ENCODE measurements at regions of chr1 and their contacts with region 1.

Region 1: DNA sequence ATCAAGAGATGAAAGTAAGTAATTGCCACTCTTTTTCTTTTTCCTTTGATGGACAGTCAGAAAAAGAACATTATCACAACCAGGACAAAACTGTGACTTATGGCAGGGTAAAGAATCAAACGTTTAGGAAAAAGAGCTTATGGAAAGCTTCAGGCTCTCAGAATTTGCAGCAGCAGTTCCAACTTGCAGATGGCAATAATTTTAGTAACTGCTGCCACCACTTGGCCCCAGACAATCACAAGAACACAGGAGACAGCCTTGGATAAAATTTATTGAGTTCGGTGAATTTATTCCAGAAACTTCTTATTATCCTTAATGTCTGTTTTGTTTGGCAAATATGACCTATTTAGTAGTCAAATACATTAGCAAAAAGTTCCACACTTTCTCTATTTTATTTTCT is 804.4 kb downstream of the BRINP3 start:
- DNase-seq: no peak
- H3K4me3 ChIP-seq: no peak overlapping the region
- H3K4me3 Mint-ChIP-seq: no peak overlapping the region
- H3K27ac Mint-ChIP-seq: no peak overlapping the region
- H3K4me1 ChIP-seq: no peaks in the 10 kb centered on the region
- H3K4me1 Mint-ChIP-seq: no peaks in the 10 kb centered on the region
- H3K27me3 ChIP-seq: no peaks in the 10 kb centered on the region
- H3K27me3 Mint-ChIP-seq: no peaks in the 10 kb centered on the region
- CTCF ChIP-seq: no peak

Region 2: DNA sequence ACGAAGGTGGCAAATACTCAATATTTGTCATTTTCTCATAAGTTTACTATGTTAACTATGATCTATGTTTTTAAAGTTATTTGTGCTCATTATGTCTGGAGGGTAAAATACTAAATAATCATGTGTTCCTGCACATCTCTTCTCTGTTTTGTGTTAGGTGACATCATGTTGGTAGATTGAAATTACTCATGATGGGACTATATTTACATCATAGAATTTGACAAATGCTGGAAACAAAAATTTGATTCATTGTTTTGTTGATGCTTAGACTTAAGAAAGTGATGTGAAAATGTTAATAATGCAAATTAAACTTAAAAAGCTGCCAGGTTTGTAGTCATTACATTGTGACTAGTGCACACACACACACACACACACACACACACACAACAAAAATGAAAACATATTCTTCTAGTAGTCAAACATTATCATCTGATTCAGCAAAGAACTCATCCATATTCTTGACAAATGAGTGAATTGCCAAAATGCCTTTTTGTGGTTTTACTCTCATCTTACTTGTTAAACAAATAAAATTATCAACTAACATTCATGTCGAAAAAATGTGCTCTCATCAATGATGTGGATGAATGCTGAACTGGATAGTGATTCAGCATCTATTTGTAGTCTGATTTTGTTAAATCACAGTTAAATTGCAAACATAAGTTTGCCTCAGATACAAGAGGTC is 66.3 kb before region 1 on chr1:
- CTCF ChIA-PET with region 1: no interaction called
- POLR2A ChIA-PET with region 1: no interaction called
- intact Hi-C with region 1: no loop called
- DNase-seq: no peak
- H3K4me3 ChIP-seq: no peak overlapping the region
- H3K4me3 Mint-ChIP-seq: no peak overlapping the region
- H3K27ac Mint-ChIP-seq: no peak overlapping the region
- H3K4me1 ChIP-seq: no peaks in the 10 kb centered on the region
- H3K4me1 Mint-ChIP-seq: no peaks in the 10 kb centered on the region
- H3K27me3 ChIP-seq: no peaks in the 10 kb centered on the region
- H3K27me3 Mint-ChIP-seq: no peaks in the 10 kb centered on the region
- CTCF ChIP-seq: no peak

Region 3: GRCh38 chr1:189619682-189620332 is 53.4 kb before region 1 on chr1:
- CTCF ChIA-PET with region 1: no interaction called
- POLR2A ChIA-PET with region 1: no interaction called
- intact Hi-C with region 1: loop called (anchors 1 kb)
- DNase-seq: no peak
- H3K4me3 ChIP-seq: no peak overlapping the region
- H3K4me3 Mint-ChIP-seq: no peak overlapping the region
- H3K27ac Mint-ChIP-seq: no peak overlapping the region
- H3K4me1 ChIP-seq: no peaks in the 10 kb centered on the region
- H3K4me1 Mint-ChIP-seq: no peaks in the 10 kb centered on the region
- H3K27me3 ChIP-seq: no peaks in the 10 kb centered on the region
- H3K27me3 Mint-ChIP-seq: no peaks in the 10 kb centered on the region
- CTCF ChIP-seq: no peak

Region 4: GRCh38 chr1:189637041-189637440 is 36.2 kb before region 1 on chr1:
- CTCF ChIA-PET with region 1: no interaction called
- POLR2A ChIA-PET with region 1: no interaction called
- intact Hi-C with region 1: no loop called
- DNase-seq: no peak
- H3K4me3 ChIP-seq: no peak overlapping the region
- H3K4me3 Mint-ChIP-seq: no peak overlapping the region
- H3K27ac Mint-ChIP-seq: no peak overlapping the region
- H3K4me1 ChIP-seq: peaks cover 16% of the 10 kb centered on the region
- H3K4me1 Mint-ChIP-seq: peaks cover 6% of the 10 kb centered on the region
- H3K27me3 ChIP-seq: no peaks in the 10 kb centered on the region
- H3K27me3 Mint-ChIP-seq: no peaks in the 10 kb centered on the region
- CTCF ChIP-seq: no peak

Region 5: GRCh38 chr1:189693140-189693539 is 19.9 kb after region 1 on chr1:
- CTCF ChIA-PET with region 1: no interaction called
- POLR2A ChIA-PET with region 1: no interaction called
- intact Hi-C with region 1: no loop called
- DNase-seq: peak in 1 of 2 experiments; percentile 7
- H3K4me3 ChIP-seq: no peak overlapping the region
- H3K4me3 Mint-ChIP-seq: no peak overlapping the region
- H3K27ac Mint-ChIP-seq: no peak overlapping the region
- H3K4me1 ChIP-seq: no peaks in the 10 kb centered on the region
- H3K4me1 Mint-ChIP-seq: no peaks in the 10 kb centered on the region
- H3K27me3 ChIP-seq: no peaks in the 10 kb centered on the region
- H3K27me3 Mint-ChIP-seq: no peaks in the 10 kb centered on the region
- CTCF ChIP-seq: no peak